ENCODE measurements at regions of chr12 and their contacts with region 1.

Region 1: GRCh38 chr12:85468356-85469157 is 188.5 kb downstream of the ALX1 start:
- H3K4me3 Mint-ChIP-seq: peak overlapping the region; percentile 80
- H3K27ac Mint-ChIP-seq: peak overlapping the region; percentile 83
- H3K4me1 Mint-ChIP-seq: peaks cover 14% of the 10 kb centered on the region
- H3K27me3 Mint-ChIP-seq: peaks cover 1% of the 10 kb centered on the region

Region 2: DNA sequence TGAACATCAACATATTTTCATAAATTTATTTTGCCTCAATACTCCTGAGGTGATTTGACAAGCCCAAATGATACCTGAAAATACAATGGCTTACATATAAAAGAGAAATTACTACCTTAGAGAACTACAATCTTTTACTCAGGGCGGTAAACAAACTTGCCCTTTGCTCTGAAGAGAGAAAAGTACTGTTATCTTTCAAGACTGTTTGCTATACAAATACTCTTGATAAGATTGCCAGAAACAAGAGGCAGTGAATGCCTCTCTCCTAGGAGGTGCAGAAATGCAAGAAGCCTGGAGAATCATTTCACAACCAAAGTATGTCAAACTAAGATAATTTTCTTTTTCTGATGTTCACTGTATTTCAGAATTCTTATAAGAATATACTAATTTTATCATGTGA is 28.3 kb before region 1 on chr12:
- intact Hi-C with region 1: no loop called
- H3K4me3 Mint-ChIP-seq: no peak overlapping the region
- H3K27ac Mint-ChIP-seq: no peak overlapping the region
- H3K4me1 Mint-ChIP-seq: no peaks in the 10 kb centered on the region
- H3K27me3 Mint-ChIP-seq: no peaks in the 10 kb centered on the region

Region 3: GRCh38 chr12:85484387-85484786 is 15.8 kb after region 1 on chr12:
- intact Hi-C with region 1: no loop called
- H3K4me3 Mint-ChIP-seq: no peak overlapping the region
- H3K27ac Mint-ChIP-seq: no peak overlapping the region
- H3K4me1 Mint-ChIP-seq: no peaks in the 10 kb centered on the region
- H3K27me3 Mint-ChIP-seq: no peaks in the 10 kb centered on the region

Region 4: GRCh38 chr12:85920324-85920947 is 451.9 kb after region 1 on chr12:
- intact Hi-C with region 1: loop called (anchors 2 kb)
- H3K4me3 Mint-ChIP-seq: no peak overlapping the region
- H3K27ac Mint-ChIP-seq: no peak overlapping the region
- H3K4me1 Mint-ChIP-seq: no peaks in the 10 kb centered on the region
- H3K27me3 Mint-ChIP-seq: no peaks in the 10 kb centered on the region

Region 5: DNA sequence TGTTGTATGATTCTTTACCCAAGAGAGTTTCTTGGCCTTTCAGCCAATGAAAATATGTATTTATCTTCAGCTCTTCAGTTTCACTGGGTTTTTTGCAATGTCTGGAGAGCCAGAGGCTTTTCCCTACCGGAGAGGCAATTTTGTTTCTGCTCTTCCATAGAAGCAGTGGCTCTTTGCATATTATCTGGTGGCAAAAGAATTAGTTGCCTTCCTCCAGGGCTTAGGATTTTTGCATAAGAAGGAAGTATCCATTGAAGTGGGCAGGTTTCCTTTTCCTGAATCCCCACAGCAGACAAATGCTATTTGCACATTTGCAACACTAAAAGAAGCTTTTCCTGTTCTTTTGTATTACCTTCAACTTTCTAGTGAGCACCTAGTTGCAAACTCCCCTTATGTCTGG is 480.7 kb after region 1 on chr12:
- intact Hi-C with region 1: no loop called
- H3K4me3 Mint-ChIP-seq: no peak overlapping the region
- H3K27ac Mint-ChIP-seq: no peak overlapping the region
- H3K4me1 Mint-ChIP-seq: peaks cover 3% of the 10 kb centered on the region
- H3K27me3 Mint-ChIP-seq: no peaks in the 10 kb centered on the region